ENCODE measurements at regions of chr9 and their contacts with region 1.

Region 1: DNA sequence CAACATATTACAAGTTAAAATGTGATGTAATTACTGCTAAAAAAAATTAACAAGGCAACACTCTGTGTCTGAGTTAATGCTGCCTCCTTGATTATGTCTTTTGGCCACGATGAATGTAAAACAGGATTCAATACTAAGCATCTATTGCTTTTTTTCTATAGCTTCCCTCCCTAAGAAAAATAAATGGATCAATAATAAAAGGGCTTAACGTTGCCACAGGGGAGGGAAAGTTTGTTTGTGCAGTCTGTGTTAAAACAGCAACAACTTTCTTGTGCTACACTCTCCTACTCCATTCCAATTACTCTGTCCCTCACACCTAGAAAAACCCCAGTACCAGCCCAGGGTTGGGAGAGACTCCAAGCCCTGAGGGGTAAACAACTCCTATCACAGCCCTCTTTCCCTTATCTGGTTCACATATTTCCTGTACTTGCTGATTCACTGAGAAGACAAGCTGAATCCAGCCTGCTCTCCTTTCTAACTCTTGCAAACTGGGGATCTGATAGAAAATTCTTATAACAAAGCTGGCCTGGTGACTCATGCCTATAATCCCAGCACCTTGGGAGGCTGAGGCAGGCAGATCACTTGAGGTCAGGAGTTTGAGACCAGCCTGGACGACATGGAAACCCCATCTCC is 44.8 kb downstream of the PTPN3 start:
- DNase-seq: peak; percentile 57 to 65
- H3K4me3 ChIP-seq: no peak overlapping the region
- H3K4me3 Mint-ChIP-seq: peak overlapping the region; percentile 3
- H3K27ac Mint-ChIP-seq: peak overlapping the region; percentile 84
- H3K4me1 ChIP-seq: peaks cover 24% of the 10 kb centered on the region
- H3K4me1 Mint-ChIP-seq: peaks cover 29% of the 10 kb centered on the region
- H3K27me3 ChIP-seq: no peaks in the 10 kb centered on the region
- H3K27me3 Mint-ChIP-seq: no peaks in the 10 kb centered on the region
- CTCF ChIP-seq: no peak

Region 2: DNA sequence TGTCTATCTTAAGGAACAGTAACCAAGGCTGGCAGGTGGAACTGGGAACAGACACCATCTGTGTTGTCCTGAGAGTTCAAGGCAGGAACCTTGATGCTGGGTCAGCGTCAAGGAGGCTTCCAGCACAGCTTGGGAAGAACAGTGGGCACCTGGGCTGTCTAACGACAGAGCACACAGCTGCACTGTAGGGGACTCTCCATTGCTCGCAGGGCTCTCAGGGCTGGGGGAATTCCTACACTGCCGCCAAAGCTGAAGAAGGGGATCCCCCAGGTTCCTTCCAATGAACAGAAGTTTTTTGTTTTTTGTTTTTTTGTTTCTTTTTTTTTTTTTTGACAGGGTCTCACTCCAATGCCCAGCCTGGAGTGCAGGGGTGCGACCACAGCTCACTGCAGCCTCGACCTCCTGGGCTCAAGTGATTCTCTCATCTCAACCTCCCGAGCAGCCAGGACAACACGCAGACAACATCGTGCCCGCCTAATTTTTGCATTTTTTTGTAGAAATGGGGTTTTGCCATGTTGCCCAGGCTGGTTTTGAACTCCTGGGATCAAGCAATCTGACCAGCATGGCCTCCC is 37.1 kb before region 1 on chr9:
- CTCF ChIA-PET with region 1: no interaction called
- POLR2A ChIA-PET with region 1: no interaction called
- intact Hi-C with region 1: no loop called
- DNase-seq: no peak
- H3K4me3 ChIP-seq: no peak overlapping the region
- H3K4me3 Mint-ChIP-seq: no peak overlapping the region
- H3K27ac Mint-ChIP-seq: no peak overlapping the region
- H3K4me1 ChIP-seq: no peaks in the 10 kb centered on the region
- H3K4me1 Mint-ChIP-seq: no peaks in the 10 kb centered on the region
- H3K27me3 ChIP-seq: no peaks in the 10 kb centered on the region
- H3K27me3 Mint-ChIP-seq: no peaks in the 10 kb centered on the region
- CTCF ChIP-seq: no peak

Region 3: GRCh38 chr9:109440797-109441287 is 12.5 kb before region 1 on chr9:
- CTCF ChIA-PET with region 1: interaction called, 11 read pairs
- POLR2A ChIA-PET with region 1: no interaction called
- intact Hi-C with region 1: no loop called
- DNase-seq: peak; percentile 66 to 67
- H3K4me3 ChIP-seq: no peak overlapping the region
- H3K4me3 Mint-ChIP-seq: no peak overlapping the region
- H3K27ac Mint-ChIP-seq: peak overlapping the region; percentile 70
- H3K4me1 ChIP-seq: no peaks in the 10 kb centered on the region
- H3K4me1 Mint-ChIP-seq: no peaks in the 10 kb centered on the region
- H3K27me3 ChIP-seq: no peaks in the 10 kb centered on the region
- H3K27me3 Mint-ChIP-seq: no peaks in the 10 kb centered on the region
- CTCF ChIP-seq: peak; percentile 79 to 80

Region 4: GRCh38 chr9:109469646-109470358 is 16.5 kb after region 1 on chr9:
- CTCF ChIA-PET with region 1: interaction called, 17 read pairs
- POLR2A ChIA-PET with region 1: no interaction called
- intact Hi-C with region 1: loop called (anchors 1 kb)
- DNase-seq: peak; percentile 70 to 78
- H3K4me3 ChIP-seq: no peak overlapping the region
- H3K4me3 Mint-ChIP-seq: no peak overlapping the region
- H3K27ac Mint-ChIP-seq: no peak overlapping the region
- H3K4me1 ChIP-seq: no peaks in the 10 kb centered on the region
- H3K4me1 Mint-ChIP-seq: peaks cover 5% of the 10 kb centered on the region
- H3K27me3 ChIP-seq: no peaks in the 10 kb centered on the region
- H3K27me3 Mint-ChIP-seq: no peaks in the 10 kb centered on the region
- CTCF ChIP-seq: peak; percentile 90 to 92

Region 5: GRCh38 chr9:109507421-109507838 is 54.1 kb after region 1 on chr9:
- CTCF ChIA-PET with region 1: no interaction called
- POLR2A ChIA-PET with region 1: no interaction called
- intact Hi-C with region 1: loop called (anchors 2 kb)
- DNase-seq: peak; percentile 60 to 61
- H3K4me3 ChIP-seq: no peak overlapping the region
- H3K4me3 Mint-ChIP-seq: no peak overlapping the region
- H3K27ac Mint-ChIP-seq: no peak overlapping the region
- H3K4me1 ChIP-seq: peaks cover 17% of the 10 kb centered on the region
- H3K4me1 Mint-ChIP-seq: peaks cover 15% of the 10 kb centered on the region
- H3K27me3 ChIP-seq: no peaks in the 10 kb centered on the region
- H3K27me3 Mint-ChIP-seq: no peaks in the 10 kb centered on the region
- CTCF ChIP-seq: no peak

Region 6: GRCh38 chr9:109538337-109538736 is 85.0 kb after region 1 on chr9:
- CTCF ChIA-PET with region 1: no interaction called
- POLR2A ChIA-PET with region 1: no interaction called
- intact Hi-C with region 1: no loop called
- DNase-seq: no peak
- H3K4me3 ChIP-seq: no peak overlapping the region
- H3K4me3 Mint-ChIP-seq: no peak overlapping the region
- H3K27ac Mint-ChIP-seq: no peak overlapping the region
- H3K4me1 ChIP-seq: no peaks in the 10 kb centered on the region
- H3K4me1 Mint-ChIP-seq: no peaks in the 10 kb centered on the region
- H3K27me3 ChIP-seq: no peaks in the 10 kb centered on the region
- H3K27me3 Mint-ChIP-seq: peaks cover 18% of the 10 kb centered on the region
- CTCF ChIP-seq: no peak